ENCODE measurements at regions of chrX and their contacts with region 1.

Region 1: GRCh38 chrX:77899081-77899828 is at the start of gene COX7B:
- DNase-seq: peak; percentile 92
- ATAC-seq: peak; percentile 67
- H3K4me3 ChIP-seq: peak within 1 kb of the TSS; percentile 62 to 95 (median 77)
- H3K4me3 Mint-ChIP-seq: peak within 1 kb of the TSS; percentile 96
- H3K27ac ChIP-seq: peak within 1 kb of the TSS; percentile 83 to 91
- H3K27ac Mint-ChIP-seq: peak within 1 kb of the TSS; percentile 96
- H3K4me1 ChIP-seq: peaks cover 6 to 8% of the 10 kb centered on the region in 2 donors
- H3K4me1 Mint-ChIP-seq: peaks cover 26% of the 10 kb centered on the region
- H3K27me3 ChIP-seq: no peaks in the 10 kb centered on the region
- H3K27me3 Mint-ChIP-seq: no peaks in the 10 kb centered on the region
- CTCF ChIP-seq: peak; percentile 56
- total RNA-seq, gene COX7B: 91.1 and 94.0 TPM in 2 replicates

Region 2: DNA sequence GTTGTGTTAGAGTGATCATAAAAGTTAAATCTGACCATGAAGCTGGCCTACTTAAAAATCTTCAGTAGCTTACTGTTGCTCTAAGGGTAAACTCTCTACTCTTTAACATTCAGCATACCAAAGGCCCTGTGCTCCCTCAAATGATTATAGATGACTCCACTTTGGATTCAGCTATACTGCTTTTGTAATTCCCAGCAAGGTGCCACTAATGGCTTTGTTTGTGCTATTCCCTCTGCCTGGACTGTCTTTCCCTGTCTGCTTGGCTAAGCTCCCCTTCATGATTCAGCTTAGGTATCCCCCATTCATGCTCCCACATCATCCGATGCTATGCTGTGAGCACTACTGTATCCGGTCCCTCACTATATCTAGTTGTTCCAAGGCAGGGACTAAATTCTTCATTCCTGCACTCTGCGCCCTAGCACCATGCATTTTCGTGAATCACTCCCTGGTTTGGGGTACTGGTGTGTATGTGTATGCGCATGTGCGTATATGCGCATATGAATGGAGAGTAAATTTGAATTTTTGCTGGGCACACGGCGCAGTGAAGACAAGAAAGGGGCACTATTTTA is 1726.8 kb before region 1 on chrX:
- CTCF ChIA-PET with region 1: no interaction called
- POLR2A ChIA-PET with region 1: no interaction called
- intact Hi-C with region 1: loop called (anchors 5 kb)
- DNase-seq: no peak
- ATAC-seq: no peak
- H3K4me3 ChIP-seq: peak overlapping the region; percentile 59 to 71 (median 65)
- H3K4me3 Mint-ChIP-seq: peak overlapping the region; percentile 100
- H3K27ac ChIP-seq: peak overlapping the region; percentile 77 to 89
- H3K27ac Mint-ChIP-seq: peak overlapping the region; percentile 99
- H3K4me1 ChIP-seq: peaks cover 17% of the 10 kb centered on the region in 2 donors
- H3K4me1 Mint-ChIP-seq: peaks cover 43% of the 10 kb centered on the region
- H3K27me3 ChIP-seq: no peaks in the 10 kb centered on the region
- H3K27me3 Mint-ChIP-seq: no peaks in the 10 kb centered on the region
- CTCF ChIP-seq: no peak

Region 3: DNA sequence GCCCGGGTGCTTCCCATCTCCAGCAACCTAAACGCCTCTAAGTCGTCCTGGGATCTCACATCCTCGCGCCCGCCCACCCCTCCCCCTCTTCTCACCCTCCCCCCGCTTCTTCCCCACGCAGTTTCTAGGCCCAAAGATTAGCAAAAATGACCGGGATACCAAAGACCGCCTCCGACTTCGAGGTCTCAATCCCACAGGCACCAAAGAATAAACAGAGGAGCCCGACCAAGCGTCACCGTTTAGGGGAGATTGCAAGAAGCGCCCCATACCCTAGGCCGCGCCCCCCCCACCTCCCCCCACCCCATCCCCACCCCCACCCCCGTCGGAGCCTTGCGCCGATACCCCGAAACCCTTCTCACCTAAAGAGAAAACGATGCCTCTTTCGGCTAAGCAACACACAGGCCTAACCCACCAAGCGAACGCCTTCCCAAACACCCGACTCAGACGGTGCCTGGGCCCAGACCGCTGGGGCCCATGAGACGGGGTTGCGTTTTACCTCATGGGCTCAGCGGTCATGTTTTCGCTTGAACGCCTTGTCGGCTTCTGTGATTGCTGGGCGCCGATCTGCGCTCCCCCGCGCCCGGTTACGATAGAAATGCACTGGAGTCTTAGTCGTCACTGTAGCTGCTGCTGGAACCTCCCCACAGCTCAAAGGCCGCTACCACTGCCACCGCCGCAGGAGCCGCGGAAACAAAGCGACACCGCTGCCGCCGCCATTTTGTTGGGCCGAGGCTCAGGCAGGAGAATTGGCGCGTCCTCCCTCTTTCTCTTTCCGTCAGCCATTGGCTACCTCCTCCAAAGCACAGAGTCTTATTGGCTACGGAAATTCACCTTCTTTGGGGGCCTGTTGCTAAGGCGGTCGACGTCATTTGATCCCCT is 113.5 kb before region 1 on chrX and contains the start of gene ATRX:
- CTCF ChIA-PET with region 1: no interaction called
- POLR2A ChIA-PET with region 1: no interaction called
- intact Hi-C with region 1: loop called (anchors 1 kb)
- DNase-seq: peak; percentile 86
- ATAC-seq: peak; percentile 93
- H3K4me3 ChIP-seq: peak within 1 kb of the TSS; percentile 70 to 89 (median 77)
- H3K4me3 Mint-ChIP-seq: peak within 1 kb of the TSS; percentile 100
- H3K27ac ChIP-seq: peak within 1 kb of the TSS; percentile 96 to 97
- H3K27ac Mint-ChIP-seq: peak within 1 kb of the TSS; percentile 100
- H3K4me1 ChIP-seq: peaks cover 6 to 29% of the 10 kb centered on the region in 2 donors
- H3K4me1 Mint-ChIP-seq: peaks cover 40% of the 10 kb centered on the region
- H3K27me3 ChIP-seq: no peaks in the 10 kb centered on the region
- H3K27me3 Mint-ChIP-seq: no peaks in the 10 kb centered on the region
- CTCF ChIP-seq: no peak
- total RNA-seq, gene ATRX: 173 and 187 TPM in 2 replicates

Region 4: GRCh38 chrX:78024349-78025108 is 125.3 kb after region 1 on chrX:
- CTCF ChIA-PET with region 1: interaction called, 5 read pairs
- POLR2A ChIA-PET with region 1: no interaction called
- intact Hi-C with region 1: loop called (anchors 1 kb)
- DNase-seq: peak; percentile 59
- ATAC-seq: peak; percentile 61
- H3K4me3 ChIP-seq: no peak overlapping the region
- H3K4me3 Mint-ChIP-seq: no peak overlapping the region
- H3K27ac ChIP-seq: no peak overlapping the region
- H3K27ac Mint-ChIP-seq: no peak overlapping the region
- H3K4me1 ChIP-seq: no peaks in the 10 kb centered on the region
- H3K4me1 Mint-ChIP-seq: no peaks in the 10 kb centered on the region
- H3K27me3 ChIP-seq: no peaks in the 10 kb centered on the region
- H3K27me3 Mint-ChIP-seq: no peaks in the 10 kb centered on the region
- CTCF ChIP-seq: peak; percentile 71

Region 5: DNA sequence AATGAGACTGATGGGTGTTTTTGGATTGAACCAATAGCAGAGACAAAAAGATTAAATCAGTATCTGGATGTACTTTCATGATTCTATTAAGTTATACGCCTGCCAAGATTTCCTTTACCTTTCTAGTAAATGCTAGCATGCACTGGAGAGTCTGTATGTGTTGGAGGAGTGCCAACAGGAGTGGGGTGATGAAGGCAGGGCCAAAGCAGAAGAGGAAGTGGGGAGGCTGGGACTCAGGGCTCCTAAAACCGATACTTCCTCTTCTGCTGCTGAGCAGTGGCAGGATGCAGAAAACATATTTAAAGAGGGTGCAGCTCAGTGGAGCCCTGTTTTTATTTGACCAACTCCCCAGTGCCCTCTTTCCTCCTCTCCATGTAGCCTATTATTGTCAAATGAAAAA is 422.6 kb after region 1 on chrX:
- CTCF ChIA-PET with region 1: no interaction called
- POLR2A ChIA-PET with region 1: no interaction called
- intact Hi-C with region 1: loop called (anchors 5 kb)
- DNase-seq: peak; percentile 81
- ATAC-seq: peak; percentile 97
- H3K4me3 ChIP-seq: peak overlapping the region in 1 of 5 experiments; percentile 38
- H3K4me3 Mint-ChIP-seq: peak overlapping the region; percentile 73
- H3K27ac ChIP-seq: peak overlapping the region in 1 of 2 donors; percentile 74
- H3K27ac Mint-ChIP-seq: peak overlapping the region; percentile 77
- H3K4me1 ChIP-seq: peaks cover 41 to 45% of the 10 kb centered on the region in 2 donors
- H3K4me1 Mint-ChIP-seq: peaks cover 55% of the 10 kb centered on the region
- H3K27me3 ChIP-seq: no peaks in the 10 kb centered on the region
- H3K27me3 Mint-ChIP-seq: no peaks in the 10 kb centered on the region
- CTCF ChIP-seq: no peak

Measured in B cell (primary cell).